Activated CD8-positive, alpha-beta T cell treated with anti-CD3 and anti-CD28 coated beads, Interleukin-2, amount 10 ng/mL, durations not matched to agents 7 days and 5 days (primary cell): ENCODE measurements at regions of chr16 and their contacts with region 1.

Region 1: GRCh38 chr16:1929578-1930337 is 11.5 kb upstream of the HS3ST6 start:
- DNase-seq: peak; percentile 92
- ATAC-seq: peak; percentile 96
- H3K4me3 Mint-ChIP-seq: peak overlapping the region; percentile 63
- H3K27ac Mint-ChIP-seq: peak overlapping the region; percentile 55
- H3K4me1 Mint-ChIP-seq: peaks cover 2% of the 10 kb centered on the region
- H3K27me3 Mint-ChIP-seq: peaks cover 4% of the 10 kb centered on the region

Region 2: DNA sequence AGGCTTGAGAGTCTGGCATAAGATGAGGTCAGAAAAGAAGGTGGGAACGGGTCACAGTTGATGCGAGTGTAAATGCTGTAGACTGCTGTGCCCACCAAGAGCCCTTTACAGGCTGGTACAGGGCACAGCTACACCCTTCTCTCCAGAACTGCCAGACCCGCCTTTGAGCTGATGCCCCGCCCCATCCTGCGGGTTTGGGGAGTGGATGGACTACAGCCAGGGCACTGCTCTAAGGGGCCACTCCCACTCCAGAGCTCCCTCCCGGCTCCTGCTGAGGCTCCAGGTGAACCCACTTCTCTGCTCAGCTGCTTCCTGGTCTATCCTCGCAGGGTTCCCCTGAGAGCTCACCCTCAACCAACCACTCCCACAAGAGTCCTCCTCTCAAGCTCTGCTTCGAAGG is 70.1 kb before region 1 on chr16:
- CTCF ChIA-PET with region 1: interaction called, 14 read pairs
- POLR2A ChIA-PET with region 1: no interaction called
- DNase-seq: no peak
- ATAC-seq: no peak
- H3K4me3 Mint-ChIP-seq: no peak overlapping the region
- H3K27ac Mint-ChIP-seq: no peak overlapping the region
- H3K4me1 Mint-ChIP-seq: peaks cover 15% of the 10 kb centered on the region
- H3K27me3 Mint-ChIP-seq: peaks cover 29% of the 10 kb centered on the region

Region 3: GRCh38 chr16:1913327-1914083 is 16.3 kb before region 1 on chr16:
- CTCF ChIA-PET with region 1: no interaction called
- POLR2A ChIA-PET with region 1: no interaction called
- DNase-seq: no peak
- ATAC-seq: no peak
- H3K4me3 Mint-ChIP-seq: no peak overlapping the region
- H3K27ac Mint-ChIP-seq: no peak overlapping the region
- H3K4me1 Mint-ChIP-seq: no peaks in the 10 kb centered on the region
- H3K27me3 Mint-ChIP-seq: peaks cover 29% of the 10 kb centered on the region